ENCODE measurements at regions of chr11 and their contacts with region 1.

Region 1: DNA sequence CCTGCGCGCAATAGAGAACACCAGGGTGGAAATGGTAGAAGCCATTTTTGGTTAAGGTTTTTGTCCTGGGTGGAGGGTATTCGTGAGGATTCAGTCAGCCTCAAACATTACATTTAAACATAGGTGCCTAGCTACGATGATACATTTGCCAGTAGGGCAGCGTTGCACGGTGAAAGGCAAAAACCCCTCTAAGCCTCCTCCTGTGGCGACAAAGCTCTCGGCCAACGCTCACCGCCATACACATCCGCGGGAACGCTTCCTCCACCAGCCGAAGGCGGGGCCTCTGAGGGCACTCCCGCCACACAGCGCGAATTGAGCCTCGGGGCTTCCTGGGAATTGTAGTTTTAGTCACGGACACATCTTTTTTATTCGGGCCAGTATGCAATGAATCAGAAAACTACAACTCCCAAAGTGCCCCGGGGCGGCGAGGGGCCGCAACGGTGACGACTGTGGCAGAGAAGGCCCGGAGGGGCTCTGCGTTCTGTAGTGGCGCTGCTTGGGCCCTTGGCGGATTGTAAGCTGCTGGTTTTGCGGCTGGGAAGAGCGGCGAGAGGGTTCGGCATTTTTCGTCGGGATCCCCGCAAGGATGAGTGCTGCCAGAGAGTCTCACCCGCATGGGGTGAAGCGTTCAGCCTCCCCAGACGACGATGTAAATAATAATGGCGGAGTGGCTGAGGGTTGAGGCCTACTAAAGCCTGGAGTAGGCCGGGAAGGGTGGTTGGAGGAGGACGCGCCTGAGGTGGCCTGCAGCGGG is at the start of gene C11orf58:
- DNase-seq: peak; percentile 94 to 98
- H3K4me3 ChIP-seq: peak within 1 kb of the TSS; percentile 93
- H3K27ac ChIP-seq: peak within 1 kb of the TSS; percentile 95
- H3K4me1 ChIP-seq: peaks cover 4 to 16% of the 10 kb centered on the region in 2 donors
- H3K27me3 ChIP-seq: no peaks in the 10 kb centered on the region
- CTCF ChIP-seq: no peak
- total RNA-seq, gene C11orf58: 40.9 TPM

Region 2: DNA sequence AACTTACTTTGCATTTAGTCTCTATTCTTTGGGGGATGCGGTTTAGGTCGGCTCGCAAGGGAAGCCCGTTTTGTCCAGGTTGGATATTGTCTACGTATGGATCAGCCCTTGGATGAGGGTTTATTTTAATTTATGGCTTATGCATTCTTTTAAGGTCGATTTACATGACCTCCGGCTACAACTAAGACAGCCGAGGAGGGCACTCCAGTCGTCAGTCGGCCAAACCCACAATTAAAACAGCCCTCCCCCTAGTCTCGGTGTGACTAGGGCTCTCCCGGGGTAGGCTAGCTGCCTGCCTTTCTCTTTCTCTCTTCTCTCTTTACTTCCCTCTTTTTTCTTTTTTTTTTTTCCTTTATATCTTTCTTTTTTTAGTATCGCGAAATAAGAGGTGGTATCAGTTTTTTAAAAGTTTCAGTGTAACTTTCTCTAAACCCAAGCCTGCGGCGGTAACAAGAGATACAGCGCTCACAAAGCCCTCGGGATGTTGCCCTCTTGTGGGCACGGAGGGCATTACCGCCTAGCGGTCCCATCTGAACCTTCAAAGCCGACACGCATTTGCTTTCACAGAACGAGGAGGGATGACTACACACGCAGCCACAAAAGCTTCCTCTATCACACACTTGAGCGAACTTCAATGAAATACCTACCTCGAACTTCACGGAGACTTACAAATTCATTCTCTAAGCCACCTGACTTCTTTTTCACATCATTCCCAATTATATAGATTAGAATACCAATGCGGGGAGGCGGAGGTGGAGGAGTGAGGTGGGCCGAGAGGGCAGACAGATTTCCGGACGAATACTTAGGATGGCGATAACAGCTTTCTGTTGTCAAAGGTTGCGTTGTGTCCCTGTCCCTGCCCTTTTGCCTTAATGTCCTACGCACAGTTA is 132.2 kb before region 1 on chr11:
- intact Hi-C with region 1: loop called (anchors 5 kb)
- DNase-seq: peak in 1 of 2 donors; percentile 94
- H3K4me3 ChIP-seq: peak overlapping the region; percentile 73 to 75
- H3K27ac ChIP-seq: peak overlapping the region; percentile 63
- H3K4me1 ChIP-seq: peaks cover 7 to 18% of the 10 kb centered on the region in 2 donors
- H3K27me3 ChIP-seq: peaks cover 15% of the 10 kb centered on the region
- CTCF ChIP-seq: peak; percentile 79 to 95 (median 95)

Region 3: GRCh38 chr11:16791191-16791961 is 53.0 kb after region 1 on chr11:
- intact Hi-C with region 1: loop called (anchors 2 kb)
- DNase-seq: peak; percentile 49 to 89
- H3K4me3 ChIP-seq: no peak overlapping the region
- H3K27ac ChIP-seq: peak overlapping the region; percentile 76 to 84
- H3K4me1 ChIP-seq: peaks cover 24 to 36% of the 10 kb centered on the region in 2 donors
- H3K27me3 ChIP-seq: no peaks in the 10 kb centered on the region
- CTCF ChIP-seq: no peak